ENCODE measurements at regions of chr5 and their contacts with region 1.

Region 1: GRCh38 chr5:168268949-168269943 is 22.2 kb upstream of the WWC1 start:
- DNase-seq: peak; percentile 87 to 98
- H3K4me3 ChIP-seq: peak overlapping the region; percentile 47; the same call in 1 of the 2 replicates
- H3K27ac ChIP-seq: peak overlapping the region; percentile 67
- H3K4me1 ChIP-seq: peaks cover 18% of the 10 kb centered on the region
- H3K27me3 ChIP-seq: no peaks in the 10 kb centered on the region
- CTCF ChIP-seq: peak; percentile 97

Region 2: DNA sequence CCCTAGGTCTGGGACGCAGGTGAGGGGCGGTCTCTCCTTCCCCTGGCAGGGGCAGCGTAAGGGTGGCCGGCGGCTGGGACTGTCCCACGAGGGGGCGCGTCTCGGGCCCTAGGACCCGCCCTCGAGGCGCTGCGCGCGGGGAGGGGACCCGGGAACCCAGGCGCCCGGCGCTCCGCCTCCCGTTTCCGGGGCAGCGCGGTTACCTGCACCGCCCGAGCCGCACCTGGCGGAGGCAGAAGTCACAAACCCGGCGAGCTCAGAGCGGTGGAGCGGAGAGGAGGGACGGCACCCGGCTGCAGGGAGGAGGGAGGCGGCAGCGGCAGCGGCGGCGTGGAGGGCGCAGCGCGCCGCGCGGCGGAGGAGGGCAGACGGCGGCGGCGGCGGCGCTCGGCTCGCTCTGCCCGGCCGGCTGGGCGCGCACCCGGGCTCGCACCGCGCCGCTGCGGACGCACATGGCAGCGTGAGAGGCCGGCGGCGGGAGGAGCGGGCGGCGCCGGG is 22.3 kb after region 1 on chr5 and contains the start of gene WWC1:
- CTCF ChIA-PET with region 1: no interaction called
- POLR2A ChIA-PET with region 1: interaction called, 4 read pairs
- intact Hi-C with region 1: loop called (anchors 1 kb)
- DNase-seq: peak; percentile 82 to 99
- H3K4me3 ChIP-seq: peak within 1 kb of the TSS; percentile 63
- H3K27ac ChIP-seq: peak within 1 kb of the TSS; percentile 91
- H3K4me1 ChIP-seq: peaks cover 76% of the 10 kb centered on the region
- H3K27me3 ChIP-seq: no peaks in the 10 kb centered on the region
- CTCF ChIP-seq: peak; percentile 68
- total RNA-seq, gene WWC1: 79.5 and 97.7 TPM in 2 replicates

Region 3: GRCh38 chr5:168359832-168360460 is 90.7 kb after region 1 on chr5:
- CTCF ChIA-PET with region 1: interaction called, 3 read pairs
- POLR2A ChIA-PET with region 1: interaction called, 4 read pairs
- intact Hi-C with region 1: loop called (anchors 1 kb)
- DNase-seq: peak; percentile 83 to 99
- H3K4me3 ChIP-seq: no peak overlapping the region
- H3K27ac ChIP-seq: peak overlapping the region; percentile 97
- H3K4me1 ChIP-seq: peaks cover 90% of the 10 kb centered on the region
- H3K27me3 ChIP-seq: no peaks in the 10 kb centered on the region
- CTCF ChIP-seq: no peak

Region 4: GRCh38 chr5:168434001-168434400 is 164.8 kb after region 1 on chr5:
- CTCF ChIA-PET with region 1: no interaction called
- POLR2A ChIA-PET with region 1: no interaction called
- intact Hi-C with region 1: loop called (anchors 2 kb)
- DNase-seq: no peak
- H3K4me3 ChIP-seq: no peak overlapping the region
- H3K27ac ChIP-seq: no peak overlapping the region
- H3K4me1 ChIP-seq: no peaks in the 10 kb centered on the region
- H3K27me3 ChIP-seq: no peaks in the 10 kb centered on the region
- CTCF ChIP-seq: no peak

Region 5: GRCh38 chr5:168579488-168580226 is 310.4 kb after region 1 on chr5:
- CTCF ChIA-PET with region 1: no interaction called
- POLR2A ChIA-PET with region 1: no interaction called
- intact Hi-C with region 1: loop called (anchors 5 kb)
- DNase-seq: peak; percentile 97 to 99
- H3K4me3 ChIP-seq: peak overlapping the region; percentile 99
- H3K27ac ChIP-seq: peak overlapping the region; percentile 80
- H3K4me1 ChIP-seq: peaks cover 26% of the 10 kb centered on the region
- H3K27me3 ChIP-seq: no peaks in the 10 kb centered on the region
- CTCF ChIP-seq: no peak

Region 6: GRCh38 chr5:168819004-168819626 is 549.9 kb after region 1 on chr5:
- CTCF ChIA-PET with region 1: no interaction called
- POLR2A ChIA-PET with region 1: no interaction called
- intact Hi-C with region 1: no loop called
- DNase-seq: no peak
- H3K4me3 ChIP-seq: no peak overlapping the region
- H3K27ac ChIP-seq: no peak overlapping the region
- H3K4me1 ChIP-seq: no peaks in the 10 kb centered on the region
- H3K27me3 ChIP-seq: peaks cover 96% of the 10 kb centered on the region
- CTCF ChIP-seq: no peak

Measured in PC-9 (cell line).